ENCODE measurements at regions of chr5 and their contacts with region 1.

Region 1: GRCh38 chr5:75236322-75237316 is at the start of gene ANKRD31:
- DNase-seq: peak; percentile 90
- ATAC-seq: peak; percentile 100
- total RNA-seq, gene ANKRD31: 0.06 to 0.08 TPM

Region 2: DNA sequence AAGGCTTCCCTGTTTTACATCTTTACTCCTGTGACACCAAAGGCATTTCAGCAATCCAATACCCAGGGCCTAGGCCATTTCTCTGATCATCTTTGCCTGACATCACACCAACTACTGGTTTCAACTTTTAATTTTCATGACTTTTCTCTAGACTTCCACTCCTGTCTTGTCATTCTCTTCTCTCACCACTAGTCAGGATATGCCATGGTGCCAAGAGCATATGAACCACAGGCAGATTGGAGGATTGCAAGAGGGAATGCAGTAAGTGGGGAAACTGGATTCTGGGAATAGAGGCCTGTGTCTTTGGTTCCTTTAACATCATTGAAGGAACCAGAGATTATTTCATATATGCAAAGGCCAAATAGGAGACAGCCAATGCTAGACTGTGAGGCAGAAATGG is 69.3 kb before region 1 on chr5:
- intact Hi-C with region 1: no loop called
- DNase-seq: no peak
- ATAC-seq: no peak

Region 3: DNA sequence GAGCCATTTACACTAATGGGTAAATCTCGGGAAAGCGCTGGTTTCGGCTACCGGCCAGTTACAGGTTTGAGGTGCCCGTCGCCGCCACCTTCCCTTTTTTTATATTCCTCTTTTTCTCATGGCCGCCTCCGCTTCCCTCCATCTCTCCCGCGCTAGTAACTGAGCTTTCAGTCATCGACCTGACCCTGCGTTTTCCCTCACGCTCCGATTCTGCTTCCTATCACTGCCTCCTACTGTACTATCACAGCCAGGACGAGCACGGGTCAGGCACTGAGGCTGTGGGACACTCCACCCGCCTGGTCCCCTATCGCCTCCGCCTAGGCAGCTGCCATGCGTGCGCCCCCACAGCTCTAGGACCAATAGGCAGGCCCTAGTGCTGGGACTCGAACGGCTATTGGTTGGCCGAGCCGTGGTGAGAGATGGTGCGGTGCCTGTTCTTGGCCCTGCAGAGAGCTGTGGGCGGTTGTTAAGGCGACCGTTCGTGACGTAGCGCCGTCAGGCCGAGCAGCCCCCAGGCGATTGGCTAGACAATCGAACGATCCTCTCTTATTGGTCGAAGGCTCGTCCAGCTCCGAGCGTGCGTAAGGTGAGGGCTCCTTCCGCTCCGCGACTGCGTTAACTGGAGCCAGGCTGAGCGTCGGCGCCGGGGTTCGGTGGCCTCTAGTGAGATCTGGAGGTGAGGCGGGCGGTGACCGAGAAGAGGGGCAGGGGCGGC is 100.2 kb after region 1 on chr5 and contains the start of gene HMGCR:
- intact Hi-C with region 1: loop called in 1 of 2 experiments (anchors 5 kb)
- DNase-seq: peak; percentile 99
- ATAC-seq: peak; percentile 98 to 99
- total RNA-seq, gene HMGCR: 10.8 to 19.6 TPM

Region 4: GRCh38 chr5:75681125-75681830 is 444.7 kb after region 1 on chr5:
- intact Hi-C with region 1: loop called (anchors 2 to 5 kb)
- DNase-seq: no peak
- ATAC-seq: peak; percentile 24 to 44

Region 5: GRCh38 chr5:76256116-76256889 is 1019.7 kb after region 1 on chr5:
- intact Hi-C with region 1: loop called in 1 of 2 experiments (anchors 10 kb)
- DNase-seq: peak; percentile 39
- ATAC-seq: peak; percentile 90 to 92